Activated naive CD4-positive, alpha-beta T cell treated with anti-CD3 and anti-CD28 coated beads for 36 hours (primary cell): ENCODE measurements at regions of chr3 and their contacts with region 1.

Region 1: DNA sequence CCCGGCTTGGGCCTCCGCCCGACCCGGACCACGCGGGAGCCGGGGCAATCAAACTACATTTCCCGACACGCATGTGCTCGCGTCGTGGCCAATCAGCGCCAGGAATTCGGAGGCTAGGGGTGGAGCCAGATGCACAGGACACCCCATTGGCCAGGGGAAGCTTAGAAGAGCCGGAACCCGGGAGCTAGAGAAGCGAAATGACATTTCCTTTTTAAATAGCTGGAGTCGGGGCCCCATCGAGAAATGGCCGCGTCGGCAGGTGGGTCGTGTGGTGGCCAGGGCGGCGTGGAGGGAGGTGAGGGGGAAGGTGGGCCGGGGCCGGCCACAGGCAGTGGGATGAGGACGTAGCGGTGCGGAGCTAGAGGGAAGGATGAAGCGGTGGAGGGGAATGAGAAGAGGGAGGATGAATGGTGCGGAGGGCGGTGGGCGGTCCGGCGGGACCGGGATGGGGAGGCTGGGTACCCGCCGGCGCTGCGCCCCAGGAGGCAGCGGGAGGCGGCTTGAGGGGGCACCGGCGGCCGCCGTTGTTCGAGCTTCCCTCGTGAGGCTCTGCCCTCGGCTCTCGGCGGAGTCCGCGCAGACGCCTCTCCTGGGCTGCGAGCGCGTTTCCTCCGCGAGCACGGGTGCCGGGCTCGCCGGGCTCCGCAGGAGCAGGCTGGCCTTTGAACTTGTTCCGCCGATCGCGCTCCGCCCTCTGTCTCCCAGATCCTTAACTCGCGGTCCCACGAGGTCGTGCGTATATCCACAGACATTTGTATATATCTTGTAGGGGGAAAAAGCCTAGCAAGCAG is at the start of gene KBTBD8:
- DNase-seq: peak; percentile 98
- H3K4me3 Mint-ChIP-seq: peak within 1 kb of the TSS; percentile 87
- H3K27ac Mint-ChIP-seq: peak within 1 kb of the TSS; percentile 95
- H3K4me1 Mint-ChIP-seq: peaks cover 27% of the 10 kb centered on the region
- H3K27me3 Mint-ChIP-seq: peaks cover 4% of the 10 kb centered on the region
- total RNA-seq, gene KBTBD8: 6.8 to 7.4 TPM

Region 2: DNA sequence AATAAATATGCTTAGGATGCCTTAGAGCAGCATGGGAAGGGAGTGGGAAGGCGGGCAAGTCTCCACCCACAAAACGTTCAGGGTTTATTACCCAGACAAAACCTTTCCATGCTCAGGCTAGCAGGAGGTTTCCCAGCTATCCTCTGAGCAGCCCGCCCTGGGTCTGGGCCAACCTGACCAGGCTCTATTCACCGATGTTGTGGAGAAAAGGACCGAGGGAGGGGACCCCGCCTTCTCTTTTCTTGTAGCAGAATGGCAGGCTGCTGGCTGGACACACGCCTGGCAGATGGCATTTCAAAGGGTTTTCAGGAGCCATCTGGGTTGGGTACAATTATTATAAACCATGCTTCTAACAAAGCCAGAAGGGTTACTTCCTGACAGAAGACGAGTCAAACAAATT is 1500.5 kb before region 1 on chr3:
- CTCF ChIA-PET with region 1: no interaction called
- intact Hi-C with region 1: no loop called
- DNase-seq: no peak
- H3K4me3 Mint-ChIP-seq: no peak overlapping the region
- H3K27ac Mint-ChIP-seq: no peak overlapping the region
- H3K4me1 Mint-ChIP-seq: no peaks in the 10 kb centered on the region
- H3K27me3 Mint-ChIP-seq: no peaks in the 10 kb centered on the region

Region 3: GRCh38 chr3:66220602-66221377 is 777.5 kb before region 1 on chr3 and contains the start of gene SLC25A26:
- CTCF ChIA-PET with region 1: no interaction called
- intact Hi-C with region 1: loop called (anchors 5 kb)
- DNase-seq: peak; percentile 99
- H3K4me3 Mint-ChIP-seq: peak within 1 kb of the TSS; percentile 91
- H3K27ac Mint-ChIP-seq: peak within 1 kb of the TSS; percentile 95
- H3K4me1 Mint-ChIP-seq: peaks cover 51% of the 10 kb centered on the region
- H3K27me3 Mint-ChIP-seq: no peaks in the 10 kb centered on the region
- total RNA-seq, gene SLC25A26: 25.3 to 26.3 TPM

Region 4: GRCh38 chr3:66362541-66362941 is 635.8 kb before region 1 on chr3:
- CTCF ChIA-PET with region 1: no interaction called
- intact Hi-C with region 1: no loop called
- DNase-seq: no peak
- H3K4me3 Mint-ChIP-seq: no peak overlapping the region
- H3K27ac Mint-ChIP-seq: no peak overlapping the region
- H3K4me1 Mint-ChIP-seq: no peaks in the 10 kb centered on the region
- H3K27me3 Mint-ChIP-seq: no peaks in the 10 kb centered on the region

Region 5: GRCh38 chr3:66500576-66501482 is 497.5 kb before region 1 on chr3 and contains the start of gene LRIG1:
- CTCF ChIA-PET with region 1: no interaction called
- intact Hi-C with region 1: loop called (anchors 1 kb)
- DNase-seq: peak; percentile 98
- H3K4me3 Mint-ChIP-seq: peak within 1 kb of the TSS; percentile 90
- H3K27ac Mint-ChIP-seq: peak within 1 kb of the TSS; percentile 84
- H3K4me1 Mint-ChIP-seq: peaks cover 50% of the 10 kb centered on the region
- H3K27me3 Mint-ChIP-seq: peaks cover 3% of the 10 kb centered on the region
- total RNA-seq, gene LRIG1: 18.3 to 19.0 TPM

Region 6: GRCh38 chr3:67077656-67078055 is 79.3 kb after region 1 on chr3:
- CTCF ChIA-PET with region 1: no interaction called
- intact Hi-C with region 1: loop called (anchors 1 kb)
- DNase-seq: peak; percentile 16
- H3K4me3 Mint-ChIP-seq: no peak overlapping the region
- H3K27ac Mint-ChIP-seq: no peak overlapping the region
- H3K4me1 Mint-ChIP-seq: peaks cover 50% of the 10 kb centered on the region
- H3K27me3 Mint-ChIP-seq: no peaks in the 10 kb centered on the region

Region 7: DNA sequence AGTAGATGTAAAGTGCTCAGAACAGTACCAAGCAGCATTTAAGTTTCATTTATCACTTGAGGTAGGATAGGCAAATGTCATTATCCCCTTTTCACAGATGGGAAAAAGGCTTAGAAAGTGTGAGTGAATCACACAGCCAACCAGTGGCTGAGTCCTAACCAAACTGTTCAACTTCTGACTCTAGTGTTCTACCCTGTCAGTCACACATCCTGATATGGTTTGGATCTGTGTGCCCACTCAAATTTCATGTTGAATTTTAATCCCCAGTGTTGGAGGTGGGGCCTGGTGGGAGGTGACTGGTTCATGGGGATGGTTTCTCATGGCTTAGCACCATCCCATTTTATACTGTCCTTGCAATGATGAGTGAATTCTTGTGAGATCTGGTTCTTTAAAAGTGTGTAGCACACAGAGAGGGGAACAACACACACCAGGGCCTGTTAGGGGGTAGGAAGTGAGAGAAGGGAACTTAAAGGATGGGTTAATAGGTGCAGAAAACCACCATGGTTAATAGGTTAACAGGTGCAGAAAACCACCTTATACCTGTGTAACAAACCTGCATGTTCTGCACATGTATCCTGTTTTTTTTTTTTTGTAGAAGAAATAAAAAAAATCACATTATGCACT is 351.4 kb after region 1 on chr3:
- CTCF ChIA-PET with region 1: no interaction called
- intact Hi-C with region 1: loop called (anchors 1 kb)
- DNase-seq: peak; percentile 70
- H3K4me3 Mint-ChIP-seq: no peak overlapping the region
- H3K27ac Mint-ChIP-seq: no peak overlapping the region
- H3K4me1 Mint-ChIP-seq: peaks cover 17% of the 10 kb centered on the region
- H3K27me3 Mint-ChIP-seq: peaks cover 7% of the 10 kb centered on the region

Region 8: DNA sequence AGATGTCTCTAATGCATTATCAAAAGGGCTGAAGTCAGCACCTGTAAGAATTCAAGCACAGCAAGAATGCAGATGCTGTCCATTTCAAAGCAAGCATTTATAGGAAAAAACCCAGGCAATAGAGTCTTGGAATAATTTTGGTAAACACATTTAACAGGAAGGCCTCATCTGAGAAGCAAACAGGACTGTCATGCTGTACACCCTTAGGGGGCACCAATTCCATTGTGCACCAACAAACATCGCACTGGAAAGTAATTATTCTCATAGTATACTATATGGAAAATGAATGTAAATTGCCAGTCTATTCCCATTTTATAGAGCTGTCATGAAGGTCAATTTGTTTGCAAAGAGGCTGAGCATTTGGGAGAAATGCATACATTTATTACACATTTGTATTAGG is 903.4 kb after region 1 on chr3:
- CTCF ChIA-PET with region 1: no interaction called
- intact Hi-C with region 1: no loop called
- DNase-seq: peak; percentile 12
- H3K4me3 Mint-ChIP-seq: no peak overlapping the region
- H3K27ac Mint-ChIP-seq: no peak overlapping the region
- H3K4me1 Mint-ChIP-seq: peaks cover 12% of the 10 kb centered on the region
- H3K27me3 Mint-ChIP-seq: no peaks in the 10 kb centered on the region

Region 9: DNA sequence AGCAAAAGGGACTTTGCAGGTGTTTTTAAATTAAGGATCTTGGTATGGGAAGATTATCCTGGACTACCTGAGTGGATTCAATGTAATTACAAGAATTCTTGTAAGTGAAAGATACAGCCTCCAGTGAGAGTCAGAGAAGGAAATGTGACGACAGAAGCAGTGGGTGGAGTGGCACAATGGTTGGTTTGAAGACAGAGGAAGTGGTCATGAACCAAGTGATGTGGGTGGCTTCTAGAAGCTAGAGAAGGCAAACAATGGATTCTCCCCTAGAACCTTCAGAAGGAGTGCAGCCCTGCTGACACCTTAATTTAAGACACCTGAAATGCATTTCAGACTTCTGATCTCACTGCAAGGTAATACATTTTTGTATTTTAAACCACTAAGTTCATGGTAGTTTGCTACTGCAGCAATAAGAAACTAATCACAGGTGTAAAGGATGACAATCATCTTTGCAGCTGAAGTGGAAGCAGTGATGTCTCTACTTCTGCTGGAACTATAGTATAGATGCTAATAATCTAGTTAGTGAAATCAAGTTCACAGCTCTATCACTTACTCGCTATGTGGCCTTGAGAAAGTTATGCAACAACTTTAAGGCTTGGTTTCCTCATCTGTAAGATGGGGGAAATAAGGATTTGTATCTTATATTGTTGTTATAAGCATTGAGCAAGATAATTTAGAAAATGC is 1059.5 kb after region 1 on chr3:
- CTCF ChIA-PET with region 1: no interaction called
- intact Hi-C with region 1: loop called (anchors 5 kb)
- DNase-seq: peak; percentile 85
- H3K4me3 Mint-ChIP-seq: peak overlapping the region; percentile 53
- H3K27ac Mint-ChIP-seq: peak overlapping the region; percentile 76
- H3K4me1 Mint-ChIP-seq: peaks cover 67% of the 10 kb centered on the region
- H3K27me3 Mint-ChIP-seq: no peaks in the 10 kb centered on the region